ENCODE measurements at regions of chr20 and their contacts with region 1.

Region 1: GRCh38 chr20:57514273-57514751 is 10.6 kb downstream of the CTCFL start:
- H3K4me3 Mint-ChIP-seq: no peak overlapping the region
- H3K27ac Mint-ChIP-seq: no peak overlapping the region
- H3K4me1 Mint-ChIP-seq: no peaks in the 10 kb centered on the region
- H3K27me3 Mint-ChIP-seq: peaks cover 37% of the 10 kb centered on the region

Region 2: DNA sequence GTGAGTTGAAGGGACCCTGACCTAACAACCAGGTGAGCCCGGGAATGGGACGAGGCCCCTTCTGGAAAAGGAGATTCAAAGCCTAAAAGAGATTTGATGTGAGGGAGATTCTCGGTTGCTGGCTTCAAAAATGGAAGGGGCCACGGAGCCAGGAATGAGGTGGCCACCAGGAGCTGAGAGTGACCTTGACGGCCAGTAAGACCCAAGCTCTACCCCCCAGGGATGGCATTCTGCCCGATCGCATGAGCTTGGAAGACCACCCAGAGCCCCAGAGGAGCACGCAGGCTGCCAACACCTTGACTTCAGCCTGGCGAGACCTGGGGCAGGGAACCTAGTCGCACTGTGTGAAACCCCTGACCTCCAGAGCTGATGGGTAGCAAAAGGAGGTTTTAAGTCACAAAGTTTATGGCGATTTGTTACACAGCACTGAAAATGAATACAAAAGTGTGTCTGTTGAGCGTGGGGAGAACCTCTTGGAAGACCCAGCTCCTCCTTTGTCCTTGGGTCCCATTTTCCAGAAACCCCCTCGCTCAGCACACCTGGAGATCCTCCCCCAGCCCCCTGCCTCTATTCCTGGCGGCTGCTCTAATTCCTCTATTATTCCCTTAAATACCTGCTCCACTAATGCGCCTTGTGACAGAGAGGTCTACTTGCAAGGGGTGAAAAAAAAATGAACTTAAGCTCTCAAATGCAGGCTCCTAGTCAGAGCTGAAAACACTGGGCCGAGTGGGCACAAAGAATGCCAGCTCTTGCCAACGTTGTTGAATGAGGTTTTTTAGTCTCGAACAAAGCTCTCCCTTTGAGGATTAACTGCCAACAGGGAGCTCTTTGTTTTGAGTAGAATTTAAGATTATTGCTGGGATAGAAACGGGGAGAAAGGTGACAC is 411.5 kb before region 1 on chr20:
- intact Hi-C with region 1: no loop called
- H3K4me3 Mint-ChIP-seq: no peak overlapping the region
- H3K27ac Mint-ChIP-seq: no peak overlapping the region
- H3K4me1 Mint-ChIP-seq: no peaks in the 10 kb centered on the region
- H3K27me3 Mint-ChIP-seq: peaks cover 4% of the 10 kb centered on the region

Region 3: GRCh38 chr20:58087193-58087858 is 573.0 kb after region 1 on chr20:
- intact Hi-C with region 1: loop called (anchors 10 kb)
- H3K4me3 Mint-ChIP-seq: no peak overlapping the region
- H3K27ac Mint-ChIP-seq: no peak overlapping the region
- H3K4me1 Mint-ChIP-seq: no peaks in the 10 kb centered on the region
- H3K27me3 Mint-ChIP-seq: no peaks in the 10 kb centered on the region